PC-9 (cell line): ENCODE measurements at regions of chr22 and their contacts with region 1.

Region 1: GRCh38 chr22:28829358-28830181 is 29.2 kb upstream of the XBP1 start:
- DNase-seq: peak; percentile 50 to 57
- H3K4me3 ChIP-seq: no peak overlapping the region
- H3K27ac ChIP-seq: no peak overlapping the region
- H3K4me1 ChIP-seq: no peaks in the 10 kb centered on the region
- H3K27me3 ChIP-seq: no peaks in the 10 kb centered on the region
- CTCF ChIP-seq: peak; percentile 97

Region 2: DNA sequence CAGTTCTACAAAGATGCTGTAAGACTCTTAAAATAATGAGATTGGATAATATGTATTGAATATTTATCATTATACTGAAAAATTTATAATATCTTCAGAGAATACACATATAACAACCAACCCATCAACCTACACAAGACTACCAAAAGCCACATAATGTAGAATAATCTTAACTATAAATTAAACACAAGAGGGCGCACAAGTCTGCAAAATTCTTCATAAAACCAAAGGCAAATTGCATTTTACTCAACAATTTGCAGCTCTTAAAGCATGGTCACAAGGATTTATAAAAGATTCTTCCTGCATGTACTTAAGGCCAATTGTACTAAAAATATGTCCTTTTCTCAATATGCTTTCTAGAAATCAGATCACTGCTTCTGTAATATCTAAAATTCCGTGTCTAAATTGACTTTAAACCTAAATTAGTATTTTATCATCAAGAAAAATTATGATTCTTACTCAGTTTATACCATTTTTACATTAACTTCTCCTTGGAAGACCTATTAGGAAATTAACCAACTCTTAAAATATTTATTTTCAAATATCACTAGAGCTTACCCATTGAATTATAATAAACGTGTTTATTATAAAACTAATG is 228.9 kb before region 1 on chr22:
- CTCF ChIA-PET with region 1: no interaction called
- POLR2A ChIA-PET with region 1: no interaction called
- intact Hi-C with region 1: loop called (anchors 1 kb)
- DNase-seq: peak in 1 of 2 experiments; percentile 40
- H3K4me3 ChIP-seq: no peak overlapping the region
- H3K27ac ChIP-seq: no peak overlapping the region
- H3K4me1 ChIP-seq: no peaks in the 10 kb centered on the region
- H3K27me3 ChIP-seq: no peaks in the 10 kb centered on the region
- CTCF ChIP-seq: peak; percentile 78

Region 3: GRCh38 chr22:28768701-28769393 is 60.7 kb before region 1 on chr22:
- CTCF ChIA-PET with region 1: no interaction called
- POLR2A ChIA-PET with region 1: no interaction called
- intact Hi-C with region 1: no loop called
- DNase-seq: no peak
- H3K4me3 ChIP-seq: no peak overlapping the region
- H3K27ac ChIP-seq: no peak overlapping the region
- H3K4me1 ChIP-seq: 0 out of 2 replicates have a peak, but pooled peaks cover 3% of the 10 kb centered on the region
- H3K27me3 ChIP-seq: no peaks in the 10 kb centered on the region
- CTCF ChIP-seq: no peak

Region 4: GRCh38 chr22:28791841-28792490 is 37.6 kb before region 1 on chr22:
- CTCF ChIA-PET with region 1: no interaction called
- POLR2A ChIA-PET with region 1: no interaction called
- intact Hi-C with region 1: loop called (anchors 2 kb)
- DNase-seq: no peak
- H3K4me3 ChIP-seq: no peak overlapping the region
- H3K27ac ChIP-seq: peak overlapping the region; percentile 12; the same call in 1 of the 2 replicates
- H3K4me1 ChIP-seq: 0 out of 2 replicates have a peak, but pooled peaks cover 4% of the 10 kb centered on the region
- H3K27me3 ChIP-seq: no peaks in the 10 kb centered on the region
- CTCF ChIP-seq: no peak